MCF 10A (cell line): ENCODE measurements at regions of chr7 and their contacts with region 1.

Region 1: DNA sequence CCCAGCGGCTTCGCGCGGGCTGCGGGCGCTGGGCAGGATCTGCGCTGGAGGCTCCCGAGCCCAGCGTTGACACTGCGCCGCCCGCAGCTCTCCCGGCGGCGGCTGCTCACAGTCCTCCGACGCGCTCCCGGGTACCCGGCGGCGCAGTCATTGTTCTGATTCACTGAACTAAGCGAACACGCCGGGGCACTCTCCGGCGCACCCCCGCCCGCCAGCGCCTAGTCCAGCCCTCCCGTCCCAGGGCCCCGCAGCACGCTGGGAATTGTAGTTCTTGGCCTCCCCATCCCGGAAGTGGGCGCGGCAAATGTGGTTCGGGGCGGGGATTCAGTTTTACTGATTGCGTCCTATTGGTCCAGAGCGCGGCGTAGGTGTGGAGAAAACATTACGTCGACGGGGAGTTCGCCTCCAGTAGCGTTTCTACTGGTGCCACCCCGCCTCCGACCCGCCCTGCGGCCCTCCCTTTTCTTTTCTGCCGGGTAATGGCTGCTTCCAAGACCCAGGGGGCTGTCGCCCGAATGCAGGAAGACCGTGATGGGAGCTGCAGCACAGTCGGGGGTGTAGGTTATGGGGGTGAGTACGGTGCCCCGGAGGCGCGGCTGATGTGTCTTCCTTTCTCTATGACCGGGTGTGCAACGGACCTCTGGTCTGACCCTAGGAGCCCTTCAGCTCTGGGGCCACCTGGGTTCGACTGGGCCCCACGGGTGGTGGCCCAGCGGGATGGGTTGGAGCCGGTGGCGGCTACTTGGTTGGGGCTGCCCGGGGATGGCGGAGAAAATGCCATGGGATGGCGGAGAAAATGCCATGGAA is at the starts of genes DOCK4 and ZNF277:
- DNase-seq: peak; percentile 100
- H3K4me3 Mint-ChIP-seq: peak within 1 kb of the TSS; percentile 91
- H3K27ac Mint-ChIP-seq: peak within 1 kb of the TSS; percentile 95
- H3K4me1 Mint-ChIP-seq: peaks cover 25% of the 10 kb centered on the region
- H3K27me3 Mint-ChIP-seq: no peaks in the 10 kb centered on the region
- CTCF ChIP-seq: no peak
- total RNA-seq, gene DOCK4: 28.0 and 31.4 TPM in 2 replicates
- total RNA-seq, gene ZNF277: 17.1 and 19.9 TPM in 2 replicates

Region 2: GRCh38 chr7:111903797-111904196 is 302.6 kb before region 1 on chr7:
- CTCF ChIA-PET with region 1: no interaction called
- POLR2A ChIA-PET with region 1: interaction called, 13 read pairs
- intact Hi-C with region 1: no loop called
- DNase-seq: peak; percentile 56
- H3K4me3 Mint-ChIP-seq: no peak overlapping the region
- H3K27ac Mint-ChIP-seq: peak overlapping the region; percentile 49
- H3K4me1 Mint-ChIP-seq: peaks cover 20% of the 10 kb centered on the region
- H3K27me3 Mint-ChIP-seq: no peaks in the 10 kb centered on the region
- CTCF ChIP-seq: no peak

Region 3: GRCh38 chr7:112001089-112001826 is 205.2 kb before region 1 on chr7:
- CTCF ChIA-PET with region 1: no interaction called
- POLR2A ChIA-PET with region 1: interaction called, 7 read pairs
- intact Hi-C with region 1: loop called (anchors 1 kb)
- DNase-seq: peak; percentile 85
- H3K4me3 Mint-ChIP-seq: peak overlapping the region; percentile 65
- H3K27ac Mint-ChIP-seq: peak overlapping the region; percentile 92
- H3K4me1 Mint-ChIP-seq: peaks cover 17% of the 10 kb centered on the region
- H3K27me3 Mint-ChIP-seq: no peaks in the 10 kb centered on the region
- CTCF ChIP-seq: no peak

Region 4: GRCh38 chr7:112064627-112065385 is 141.6 kb before region 1 on chr7:
- CTCF ChIA-PET with region 1: no interaction called
- POLR2A ChIA-PET with region 1: no interaction called
- intact Hi-C with region 1: no loop called
- DNase-seq: no peak
- H3K4me3 Mint-ChIP-seq: no peak overlapping the region
- H3K27ac Mint-ChIP-seq: no peak overlapping the region
- H3K4me1 Mint-ChIP-seq: peaks cover 19% of the 10 kb centered on the region
- H3K27me3 Mint-ChIP-seq: no peaks in the 10 kb centered on the region
- CTCF ChIP-seq: no peak

Region 5: DNA sequence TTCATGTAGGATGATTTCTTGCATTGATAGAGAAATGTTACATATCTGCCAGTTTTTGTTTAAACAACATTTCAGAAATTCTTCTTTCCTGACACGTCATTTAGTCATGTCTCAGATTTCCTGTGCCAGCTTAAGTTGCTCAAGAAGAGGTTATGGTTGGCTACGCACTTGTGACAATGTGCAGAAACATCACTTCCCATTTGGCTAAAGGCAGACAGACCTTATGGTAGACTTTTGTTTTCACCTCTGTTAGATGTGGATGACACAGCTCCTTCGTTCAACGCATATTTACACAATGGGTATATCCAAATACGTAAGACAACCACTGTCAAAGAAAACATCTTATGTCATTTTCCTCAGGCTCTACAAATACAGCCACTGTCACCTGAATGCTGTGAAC is 126.0 kb before region 1 on chr7:
- CTCF ChIA-PET with region 1: no interaction called
- POLR2A ChIA-PET with region 1: interaction called, 10 read pairs
- intact Hi-C with region 1: loop called (anchors 1 kb)
- DNase-seq: peak; percentile 86
- H3K4me3 Mint-ChIP-seq: peak overlapping the region; percentile 42
- H3K27ac Mint-ChIP-seq: peak overlapping the region; percentile 89
- H3K4me1 Mint-ChIP-seq: peaks cover 24% of the 10 kb centered on the region
- H3K27me3 Mint-ChIP-seq: no peaks in the 10 kb centered on the region
- CTCF ChIP-seq: no peak

Region 6: DNA sequence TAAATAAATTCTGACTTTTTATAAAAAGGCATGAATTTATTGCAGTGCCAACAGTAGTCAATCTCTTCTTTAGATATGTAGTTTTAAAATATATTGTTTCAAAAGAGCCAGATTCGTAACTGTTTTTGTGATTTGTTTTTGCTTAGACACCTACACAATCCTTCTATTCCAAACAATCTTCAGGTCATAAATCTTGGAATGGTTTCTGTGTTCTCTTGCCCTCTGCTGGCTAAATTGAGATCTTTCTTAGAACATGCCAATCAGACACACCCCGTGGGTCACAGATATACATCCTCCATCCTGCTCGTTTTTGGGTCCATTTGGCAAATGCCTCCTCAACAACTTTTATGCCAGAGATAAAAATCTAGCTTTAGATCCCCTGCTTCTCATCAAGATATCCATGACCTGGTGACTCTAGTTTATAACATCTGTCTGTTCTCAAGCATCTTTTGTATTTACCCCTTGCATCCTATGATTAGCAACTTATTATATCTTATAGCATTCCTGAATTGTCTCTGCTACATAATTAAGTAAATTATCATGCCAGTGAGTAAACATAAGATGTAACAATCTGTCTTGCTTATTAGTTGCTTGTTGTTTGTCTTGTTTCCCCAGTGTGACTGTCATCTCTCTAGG is 208.5 kb after region 1 on chr7:
- CTCF ChIA-PET with region 1: interaction called, 5 read pairs
- POLR2A ChIA-PET with region 1: interaction called, 12 read pairs
- intact Hi-C with region 1: loop called (anchors 2 kb)
- DNase-seq: peak; percentile 64
- H3K4me3 Mint-ChIP-seq: no peak overlapping the region
- H3K27ac Mint-ChIP-seq: no peak overlapping the region
- H3K4me1 Mint-ChIP-seq: peaks cover 9% of the 10 kb centered on the region
- H3K27me3 Mint-ChIP-seq: no peaks in the 10 kb centered on the region
- CTCF ChIP-seq: peak; percentile 54